PC-9 (cell line): ENCODE measurements at regions of chr15 and their contacts with region 1.

Region 1: GRCh38 chr15:60326824-60327654 is 70.7 kb downstream of the ANXA2 start:
- DNase-seq: peak; percentile 36 to 42
- H3K4me3 ChIP-seq: no peak overlapping the region
- H3K27ac ChIP-seq: no peak overlapping the region
- H3K4me1 ChIP-seq: no peaks in the 10 kb centered on the region
- H3K27me3 ChIP-seq: no peaks in the 10 kb centered on the region
- CTCF ChIP-seq: peak; percentile 89

Region 2: DNA sequence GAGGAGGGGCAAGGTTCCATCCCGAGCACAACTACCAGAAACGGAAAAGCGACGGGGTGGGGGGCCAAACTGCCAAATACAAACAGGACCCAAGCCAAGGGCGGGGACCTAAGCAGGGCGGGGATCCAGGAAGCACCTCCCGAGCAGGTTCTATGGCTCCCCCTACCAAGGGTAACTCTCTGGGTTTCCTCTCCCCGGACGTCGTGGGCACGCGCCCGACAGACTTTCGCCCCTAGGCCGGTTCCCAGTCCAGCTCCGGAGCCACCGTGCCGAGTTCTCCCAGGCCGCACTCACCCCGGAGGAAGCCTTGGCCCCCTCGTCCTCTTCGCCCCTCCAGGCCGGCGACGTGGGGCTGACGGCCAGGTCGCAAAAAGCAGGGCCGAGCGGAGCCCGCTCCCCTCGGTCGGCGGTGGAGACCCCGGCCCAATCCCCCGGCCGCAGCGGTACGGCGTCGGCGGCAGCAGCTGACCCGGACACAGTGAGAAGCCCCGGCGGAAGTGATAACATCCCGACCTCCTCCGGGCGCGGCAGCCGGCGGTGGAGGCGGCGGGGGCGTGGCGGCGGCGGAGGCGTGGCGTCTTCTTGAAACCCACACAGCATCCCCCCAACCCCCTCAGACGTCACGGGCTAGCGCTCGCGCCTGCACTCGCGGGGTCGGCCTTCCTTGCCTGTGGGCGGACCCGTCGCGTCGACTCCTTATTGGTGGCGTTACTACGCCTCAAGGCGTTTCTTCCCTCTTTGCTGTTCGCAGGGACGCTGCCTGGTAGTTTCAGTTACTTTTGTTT is 638.0 kb before region 1 on chr15 and contains the start of gene BNIP2:
- CTCF ChIA-PET with region 1: no interaction called
- POLR2A ChIA-PET with region 1: no interaction called
- intact Hi-C with region 1: loop called (anchors 1 kb)
- DNase-seq: peak; percentile 90 to 98
- H3K4me3 ChIP-seq: peak within 1 kb of the TSS; percentile 73
- H3K27ac ChIP-seq: peak within 1 kb of the TSS; percentile 95
- H3K4me1 ChIP-seq: peaks cover 15% of the 10 kb centered on the region
- H3K27me3 ChIP-seq: no peaks in the 10 kb centered on the region
- CTCF ChIP-seq: no peak
- total RNA-seq, gene BNIP2: 59.5 and 64.3 TPM in 2 replicates

Region 3: GRCh38 chr15:59917504-59918157 is 409.4 kb before region 1 on chr15:
- CTCF ChIA-PET with region 1: interaction called, 13 read pairs
- POLR2A ChIA-PET with region 1: no interaction called
- intact Hi-C with region 1: loop called (anchors 1 kb)
- DNase-seq: peak; percentile 48 to 78
- H3K4me3 ChIP-seq: no peak overlapping the region
- H3K27ac ChIP-seq: no peak overlapping the region
- H3K4me1 ChIP-seq: peaks cover 19% of the 10 kb centered on the region
- H3K27me3 ChIP-seq: no peaks in the 10 kb centered on the region
- CTCF ChIP-seq: peak; percentile 65

Region 4: GRCh38 chr15:60062826-60063225 is 264.2 kb before region 1 on chr15:
- CTCF ChIA-PET with region 1: interaction called, 13 read pairs
- POLR2A ChIA-PET with region 1: no interaction called
- intact Hi-C with region 1: no loop called
- DNase-seq: no peak
- H3K4me3 ChIP-seq: no peak overlapping the region
- H3K27ac ChIP-seq: no peak overlapping the region
- H3K4me1 ChIP-seq: no peaks in the 10 kb centered on the region
- H3K27me3 ChIP-seq: no peaks in the 10 kb centered on the region
- CTCF ChIP-seq: no peak

Region 5: GRCh38 chr15:60392986-60393790 is 66.1 kb after region 1 on chr15:
- CTCF ChIA-PET with region 1: no interaction called
- POLR2A ChIA-PET with region 1: no interaction called
- intact Hi-C with region 1: no loop called
- DNase-seq: peak; percentile 80 to 85
- H3K4me3 ChIP-seq: peak overlapping the region; percentile 68; the same call in 1 of the 2 replicates
- H3K27ac ChIP-seq: peak overlapping the region; percentile 94
- H3K4me1 ChIP-seq: peaks cover 56% of the 10 kb centered on the region
- H3K27me3 ChIP-seq: no peaks in the 10 kb centered on the region
- CTCF ChIP-seq: no peak

Region 6: DNA sequence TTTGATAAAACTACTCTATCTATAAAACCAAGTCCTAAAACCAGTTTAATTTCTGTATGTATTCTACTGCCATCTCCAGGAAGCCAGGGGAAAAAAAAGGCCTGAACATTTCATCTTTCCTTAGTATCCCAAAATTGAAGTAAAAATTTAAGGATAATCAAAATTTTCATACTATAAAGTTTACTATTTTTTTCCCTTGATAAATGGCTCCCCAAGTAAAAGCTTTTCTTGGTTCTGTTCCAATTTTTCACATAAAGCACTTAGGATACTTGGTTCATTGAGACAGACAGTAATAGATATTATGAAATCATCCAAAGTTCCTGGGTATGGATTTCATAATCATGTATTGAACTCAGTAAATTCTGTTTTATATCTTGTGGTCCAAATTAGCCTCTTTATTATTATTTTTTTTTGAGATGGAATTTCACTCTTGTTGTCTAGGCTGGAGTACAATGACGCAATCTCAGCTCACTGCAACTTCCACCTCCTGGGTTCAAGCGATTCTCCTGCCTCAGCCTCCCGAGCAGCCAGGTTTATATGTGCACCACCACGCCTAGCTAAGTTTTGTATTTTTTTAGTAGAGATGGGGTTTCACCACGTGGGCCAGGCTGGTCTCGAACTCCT is 117.4 kb after region 1 on chr15:
- CTCF ChIA-PET with region 1: no interaction called
- POLR2A ChIA-PET with region 1: no interaction called
- intact Hi-C with region 1: loop called (anchors 2 kb)
- DNase-seq: no peak
- H3K4me3 ChIP-seq: no peak overlapping the region
- H3K27ac ChIP-seq: no peak overlapping the region
- H3K4me1 ChIP-seq: no peaks in the 10 kb centered on the region
- H3K27me3 ChIP-seq: no peaks in the 10 kb centered on the region
- CTCF ChIP-seq: peak; percentile 60

Region 7: DNA sequence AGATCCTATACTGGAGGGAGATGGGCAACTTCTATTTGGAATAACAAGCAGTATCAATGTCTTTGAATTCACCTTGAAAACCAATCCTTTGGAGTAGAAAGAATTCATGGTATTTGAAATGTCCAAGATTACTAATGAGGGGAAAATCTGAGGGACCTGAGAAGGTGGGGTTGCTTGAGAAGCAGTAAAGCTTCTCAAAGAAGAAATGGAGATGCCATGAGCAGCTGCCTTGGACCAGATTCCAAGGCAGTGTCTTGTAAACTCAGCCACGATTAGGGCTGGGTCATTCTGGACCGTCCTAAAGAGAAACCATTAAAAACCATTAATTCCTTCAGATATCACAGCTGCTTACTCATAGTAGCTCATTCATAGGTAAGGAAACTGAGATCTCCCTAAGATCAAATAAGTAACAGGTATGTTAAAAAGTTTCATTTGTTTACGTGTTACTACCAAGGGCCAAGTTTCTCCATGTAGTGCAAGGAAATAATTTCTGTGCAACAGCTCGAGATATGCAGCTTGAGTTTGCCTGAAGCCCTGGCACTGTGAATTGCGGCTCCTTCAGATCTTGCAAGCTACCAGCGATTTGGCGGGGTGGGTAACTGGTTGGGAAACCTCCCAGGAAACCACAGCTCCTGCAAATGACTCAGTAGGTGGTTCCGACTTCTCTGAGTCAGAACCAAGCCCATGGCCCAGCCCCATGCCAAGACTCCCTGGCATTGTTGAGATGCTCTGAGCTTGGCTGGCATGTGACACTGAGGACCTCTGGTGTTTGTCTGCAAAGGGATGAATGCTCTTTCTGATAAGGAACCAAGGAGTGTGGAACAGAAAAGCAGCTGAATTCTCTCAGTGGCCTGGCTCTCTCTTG is 605.2 kb after region 1 on chr15:
- CTCF ChIA-PET with region 1: no interaction called
- POLR2A ChIA-PET with region 1: no interaction called
- intact Hi-C with region 1: loop called (anchors 2 kb)
- DNase-seq: peak; percentile 85 to 93
- H3K4me3 ChIP-seq: no peak overlapping the region; the same call in 1 of the 2 replicates
- H3K27ac ChIP-seq: peak overlapping the region; percentile 62
- H3K4me1 ChIP-seq: peaks cover 21% of the 10 kb centered on the region
- H3K27me3 ChIP-seq: no peaks in the 10 kb centered on the region
- CTCF ChIP-seq: peak; percentile 64